ENCODE measurements at regions of chr7 and their contacts with region 1.

Region 1: DNA sequence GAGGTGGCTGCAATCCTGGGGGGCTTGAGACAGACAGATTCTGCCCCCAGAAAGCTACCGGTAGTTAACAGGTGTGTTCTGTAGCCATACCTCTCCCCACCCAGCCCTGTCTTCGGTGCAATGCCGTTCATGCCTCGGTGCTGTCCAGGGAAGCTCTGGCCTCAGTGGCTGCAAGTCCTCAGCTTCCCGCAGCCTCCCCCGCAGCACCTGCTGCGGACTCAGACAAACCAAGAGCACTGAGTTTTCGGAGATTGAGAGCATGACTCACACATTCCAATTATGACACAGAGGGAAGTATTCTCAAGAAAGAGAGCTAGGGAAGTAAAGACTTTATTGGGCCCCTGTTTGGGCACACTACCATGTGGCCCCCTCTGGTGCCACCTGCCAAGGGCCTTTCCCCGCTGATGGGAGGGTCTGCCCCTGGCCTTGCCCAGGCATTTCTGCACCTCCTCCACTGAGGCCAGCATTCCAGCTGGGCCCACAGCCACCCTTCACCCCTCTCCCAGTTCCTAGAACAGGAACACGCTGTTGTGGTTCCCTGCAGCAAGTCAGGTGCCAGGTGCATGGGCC is 30.2 kb upstream of the EZH2 start:
- DNase-seq: peak; percentile 75
- H3K4me3 Mint-ChIP-seq: peak overlapping the region; percentile 61
- H3K27ac Mint-ChIP-seq: peak overlapping the region; percentile 96
- H3K4me1 Mint-ChIP-seq: peaks cover 71% of the 10 kb centered on the region
- H3K27me3 Mint-ChIP-seq: no peaks in the 10 kb centered on the region

Region 2: GRCh38 chr7:148563583-148564274 is 350.6 kb before region 1 on chr7:
- CTCF ChIA-PET with region 1: no interaction called
- intact Hi-C with region 1: loop called (anchors 1 kb)
- DNase-seq: peak; percentile 53
- H3K4me3 Mint-ChIP-seq: peak overlapping the region; percentile 20
- H3K27ac Mint-ChIP-seq: peak overlapping the region; percentile 89
- H3K4me1 Mint-ChIP-seq: peaks cover 27% of the 10 kb centered on the region
- H3K27me3 Mint-ChIP-seq: peaks cover 2% of the 10 kb centered on the region

Region 3: DNA sequence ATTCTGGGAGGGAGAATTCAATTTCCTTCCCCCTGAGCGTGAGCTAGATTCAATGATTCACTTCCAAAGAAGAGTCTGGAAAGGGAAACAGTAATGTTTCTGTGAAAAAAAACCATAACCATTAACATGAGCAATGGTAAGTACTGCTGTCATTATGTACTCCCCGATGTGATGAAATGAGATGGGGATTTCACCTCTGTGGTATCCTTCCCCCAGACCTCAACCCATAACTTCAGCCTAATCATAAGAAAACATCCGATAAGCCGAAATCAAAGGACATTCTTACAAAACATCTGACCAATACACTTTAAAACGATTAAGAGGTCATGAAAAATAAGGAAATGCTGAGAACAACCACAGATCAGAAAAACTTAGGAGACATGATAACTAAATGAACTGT is 57.4 kb before region 1 on chr7:
- CTCF ChIA-PET with region 1: interaction called, 5 read pairs
- intact Hi-C with region 1: loop called (anchors 1 kb)
- DNase-seq: peak; percentile 14
- H3K4me3 Mint-ChIP-seq: no peak overlapping the region
- H3K27ac Mint-ChIP-seq: peak overlapping the region; percentile 32
- H3K4me1 Mint-ChIP-seq: peaks cover 38% of the 10 kb centered on the region
- H3K27me3 Mint-ChIP-seq: no peaks in the 10 kb centered on the region

Region 4: GRCh38 chr7:148940702-148941597 is 26.7 kb after region 1 on chr7:
- CTCF ChIA-PET with region 1: interaction called, 13 read pairs
- intact Hi-C with region 1: loop called (anchors 1 kb)
- DNase-seq: peak; percentile 68
- H3K4me3 Mint-ChIP-seq: peak overlapping the region; percentile 94
- H3K27ac Mint-ChIP-seq: peak overlapping the region; percentile 98
- H3K4me1 Mint-ChIP-seq: peaks cover 15% of the 10 kb centered on the region
- H3K27me3 Mint-ChIP-seq: no peaks in the 10 kb centered on the region

Region 5: DNA sequence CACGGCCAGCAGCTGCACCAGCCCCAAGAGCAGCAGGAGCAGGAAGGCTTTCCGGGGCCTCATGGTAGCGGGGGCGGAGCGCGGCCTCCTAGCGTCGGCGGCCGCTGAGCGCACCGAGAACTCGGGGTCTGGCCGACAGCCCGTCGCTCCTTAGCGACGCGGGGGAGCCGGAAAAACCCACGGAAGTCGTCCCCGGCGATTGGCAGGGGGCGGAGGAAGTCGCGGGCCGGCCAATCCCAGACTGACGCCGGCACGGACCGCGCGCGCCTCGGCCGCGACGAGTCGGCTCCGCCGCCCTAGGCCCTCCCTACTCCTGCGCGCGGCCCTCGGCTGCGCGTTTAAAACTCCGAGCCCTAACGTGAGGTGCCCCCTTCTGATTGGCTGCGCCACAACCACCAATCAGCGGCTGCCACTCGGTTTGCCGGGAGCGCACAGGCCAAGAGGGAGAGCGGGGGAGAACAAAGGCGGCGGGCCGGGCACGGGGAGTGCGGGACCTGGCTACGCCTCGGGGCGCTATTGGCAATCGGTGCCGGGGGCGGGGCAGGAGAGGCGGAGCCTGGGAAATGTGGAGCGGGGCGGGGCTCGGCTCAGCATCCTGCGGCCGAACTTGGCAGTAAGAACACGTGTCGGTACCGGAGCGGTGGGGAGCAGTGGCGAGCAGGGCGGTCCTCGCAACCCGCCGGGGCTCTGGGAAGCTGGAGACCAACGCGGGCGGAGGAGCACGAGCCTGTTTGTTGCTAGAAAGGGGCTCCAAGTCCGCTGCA is 114.2 kb after region 1 on chr7 and contains the start of gene PDIA4:
- CTCF ChIA-PET with region 1: no interaction called
- intact Hi-C with region 1: loop called (anchors 1 kb)
- DNase-seq: peak; percentile 100
- H3K4me3 Mint-ChIP-seq: peak within 1 kb of the TSS; percentile 95
- H3K27ac Mint-ChIP-seq: peak within 1 kb of the TSS; percentile 89
- H3K4me1 Mint-ChIP-seq: peaks cover 37% of the 10 kb centered on the region
- H3K27me3 Mint-ChIP-seq: no peaks in the 10 kb centered on the region
- total RNA-seq, gene PDIA4: 80.2 to 82.8 TPM

Region 6: DNA sequence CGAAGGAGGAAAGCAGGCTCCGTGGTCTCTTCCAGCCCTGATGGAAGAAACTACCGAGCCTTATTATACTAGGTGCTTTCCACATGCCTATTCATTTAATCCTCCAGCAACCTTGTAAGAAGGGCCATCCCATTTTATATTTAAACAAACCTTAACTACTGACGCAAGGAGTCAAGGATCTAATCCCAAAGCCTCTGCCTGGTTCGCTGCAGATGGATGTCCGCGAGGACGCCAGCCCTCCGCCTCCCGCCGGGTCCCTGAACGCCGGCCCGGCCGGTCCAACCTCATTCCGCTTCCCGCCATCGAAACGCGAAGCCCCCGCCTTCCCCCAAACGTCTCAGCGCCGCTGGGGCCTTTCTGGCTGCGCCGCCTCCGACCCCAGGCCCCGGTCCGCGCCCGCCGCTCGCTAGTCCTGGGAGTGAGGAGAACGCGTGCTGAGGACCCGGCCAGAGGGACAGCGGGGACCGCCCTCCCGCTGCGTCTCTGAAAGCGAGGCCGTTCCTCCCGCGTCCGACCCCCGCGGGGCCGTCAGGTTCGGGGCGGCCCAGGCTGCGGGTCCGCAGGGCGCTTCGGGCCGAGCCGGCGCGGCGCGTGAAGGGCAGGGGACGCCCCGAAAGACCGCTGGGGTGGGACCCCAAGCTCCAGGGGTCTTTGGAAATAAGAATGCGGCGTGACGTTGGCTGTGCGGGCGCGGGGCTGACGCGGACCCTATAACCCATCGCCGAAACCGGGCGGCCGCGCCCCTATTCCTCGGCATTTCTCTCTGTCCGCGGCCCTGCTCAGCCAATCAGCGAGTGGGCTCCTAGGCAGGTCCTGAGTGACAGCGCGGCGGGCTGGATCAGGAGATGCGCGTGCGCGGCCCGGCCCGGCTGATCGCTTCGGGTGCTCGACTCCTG is 959.0 kb after region 1 on chr7 and contains the start of gene ATP6V0E2:
- CTCF ChIA-PET with region 1: no interaction called
- intact Hi-C with region 1: loop called (anchors 10 kb)
- DNase-seq: peak; percentile 94
- H3K4me3 Mint-ChIP-seq: peak within 1 kb of the TSS; percentile 83
- H3K27ac Mint-ChIP-seq: peak within 1 kb of the TSS; percentile 88
- H3K4me1 Mint-ChIP-seq: peaks cover 72% of the 10 kb centered on the region
- H3K27me3 Mint-ChIP-seq: no peaks in the 10 kb centered on the region
- total RNA-seq, gene ATP6V0E2: 31.8 to 32.4 TPM

Measured in activated naive CD4-positive, alpha-beta T cell treated with anti-CD3 and anti-CD28 coated beads for 36 hours (primary cell).